Sigmoid colon (tissue), 7 donors: ENCODE measurements at regions of chr11 and their contacts with region 1.

Region 1: DNA sequence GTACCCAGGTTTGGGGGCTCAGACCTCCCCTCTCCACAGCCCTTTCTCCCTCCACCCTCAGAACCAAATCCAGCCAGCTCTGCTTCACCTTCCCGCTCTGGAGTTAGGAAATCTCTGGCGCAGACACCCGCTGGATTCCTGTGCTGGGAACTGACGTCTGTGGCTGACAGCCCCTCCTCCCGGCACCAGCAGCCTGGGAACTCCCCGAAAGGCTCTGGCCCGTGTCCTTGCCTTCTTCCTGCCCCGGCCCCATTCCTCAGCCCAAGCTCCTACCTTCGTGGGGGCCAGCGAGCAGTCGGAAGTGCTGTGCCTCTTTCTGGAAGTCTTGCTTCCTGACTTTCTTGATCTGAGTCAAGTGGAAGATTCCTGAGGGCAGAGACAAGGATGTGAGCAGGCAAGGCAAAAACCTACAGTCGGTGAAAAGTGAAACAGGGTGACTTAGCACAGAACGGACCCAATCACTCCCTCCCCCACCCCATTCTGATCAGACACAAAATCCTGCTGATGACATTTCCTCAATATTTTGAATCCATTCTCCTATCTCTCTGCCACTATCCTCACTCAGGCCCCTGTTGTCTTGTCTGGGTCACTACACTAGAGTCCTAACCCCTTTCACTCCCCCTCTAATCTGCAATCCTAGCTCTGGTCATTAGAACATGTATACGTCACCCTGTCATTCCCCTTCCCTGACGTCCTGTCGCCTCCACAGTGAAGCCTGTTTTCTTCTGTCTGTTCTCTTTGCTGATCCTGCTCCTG is 34.1 kb downstream of the CHRDL2 start:
- DNase-seq: peak; percentile 97
- H3K4me3 ChIP-seq: peak overlapping the region in 2 of 4 donors; percentile 12 to 14
- H3K27ac ChIP-seq: peak overlapping the region; percentile 83 to 91 (median 86)
- H3K4me1 ChIP-seq: peaks cover 0 to 54% (median 48%) of the 10 kb centered on the region in 4 donors
- H3K27me3 ChIP-seq: no peaks in the 10 kb centered on the region
- CTCF ChIP-seq: no peak
- EP300 ChIP-seq: peak in 2 of 4 donors; percentile 96 to 98
- POLR2A ChIP-seq: no peak

Region 2: DNA sequence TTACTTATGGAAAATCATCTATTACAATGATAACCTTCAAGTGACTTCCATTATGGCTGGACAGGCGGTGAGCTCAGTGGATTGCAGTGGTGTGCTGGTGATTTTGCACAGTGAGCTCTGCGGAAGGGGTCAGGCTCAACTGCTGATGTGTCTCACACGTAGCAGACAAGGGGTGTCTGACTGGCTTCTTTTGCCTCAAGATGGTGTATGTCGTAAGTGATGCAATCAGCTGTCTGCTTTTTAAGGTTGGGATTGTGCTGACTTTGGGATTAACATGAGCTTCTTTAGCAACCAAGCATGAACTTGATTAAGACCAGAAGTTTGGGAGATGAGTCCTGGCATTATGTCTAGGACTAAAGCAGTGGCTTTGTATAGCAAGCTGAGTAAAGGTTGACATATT is 55.2 kb before region 1 on chr11:
- intact Hi-C with region 1: loop called (anchors 2 kb)
- DNase-seq: no peak
- H3K4me3 ChIP-seq: no peak overlapping the region
- H3K27ac ChIP-seq: peak overlapping the region in 3 of 4 donors; percentile 81 to 89 (median 85)
- H3K4me1 ChIP-seq: peaks cover 0 to 81% (median 68%) of the 10 kb centered on the region in 4 donors
- H3K27me3 ChIP-seq: no peaks in the 10 kb centered on the region
- CTCF ChIP-seq: no peak
- EP300 ChIP-seq: no peak
- POLR2A ChIP-seq: no peak

Region 3: GRCh38 chr11:74726547-74727182 is 29.6 kb after region 1 on chr11:
- intact Hi-C with region 1: loop called (anchors 1 kb)
- DNase-seq: peak; percentile 93
- H3K4me3 ChIP-seq: no peak overlapping the region
- H3K27ac ChIP-seq: peak overlapping the region; percentile 37 to 93 (median 81)
- H3K4me1 ChIP-seq: peaks cover 0 to 75% (median 47%) of the 10 kb centered on the region in 4 donors
- H3K27me3 ChIP-seq: peaks cover 0 to 10% (median 0%) of the 10 kb centered on the region in 3 donors
- CTCF ChIP-seq: peak; percentile 93 to 98 (median 96)
- EP300 ChIP-seq: no peak
- POLR2A ChIP-seq: no peak